Panc1 (cell line): ENCODE measurements at regions of chr10 and their contacts with region 1.

Region 1: GRCh38 chr10:14545827-14546226 is 215.1 kb upstream of the FRMD4A start:
- DNase-seq: no peak
- ATAC-seq: no peak
- H3K4me3 ChIP-seq: no peak overlapping the region
- H3K27ac ChIP-seq: no peak overlapping the region
- H3K4me1 ChIP-seq: no peaks in the 10 kb centered on the region
- H3K27me3 ChIP-seq: no peaks in the 10 kb centered on the region
- CTCF ChIP-seq: no peak

Region 2: GRCh38 chr10:15147594-15148392 is 602.0 kb after region 1 on chr10:
- CTCF ChIA-PET with region 1: interaction called, 10 read pairs
- POLR2A ChIA-PET with region 1: no interaction called
- in situ Hi-C with region 1: no loop called
- intact Hi-C with region 1: no loop called
- DNase-seq: no peak
- ATAC-seq: no peak
- H3K4me3 ChIP-seq: no peak overlapping the region
- H3K27ac ChIP-seq: no peak overlapping the region
- H3K4me1 ChIP-seq: no peaks in the 10 kb centered on the region
- H3K27me3 ChIP-seq: no peaks in the 10 kb centered on the region
- CTCF ChIP-seq: no peak